MCF 10A (cell line): ENCODE measurements at regions of chr6 and their contacts with region 1.

Region 1: GRCh38 chr6:118893807-118894424 is at the start of gene ASF1A:
- DNase-seq: peak; percentile 99
- H3K4me3 Mint-ChIP-seq: peak within 1 kb of the TSS; percentile 95
- H3K27ac Mint-ChIP-seq: peak within 1 kb of the TSS; percentile 95
- H3K4me1 Mint-ChIP-seq: peaks cover 21% of the 10 kb centered on the region
- H3K27me3 Mint-ChIP-seq: no peaks in the 10 kb centered on the region
- CTCF ChIP-seq: peak; percentile 52
- total RNA-seq, gene ASF1A: 30.4 and 36.4 TPM in 2 replicates

Region 2: GRCh38 chr6:118881440-118882313 is 12.2 kb before region 1 on chr6:
- CTCF ChIA-PET with region 1: interaction called, 24 read pairs
- POLR2A ChIA-PET with region 1: interaction called, 31 read pairs
- intact Hi-C with region 1: no loop called
- DNase-seq: no peak
- H3K4me3 Mint-ChIP-seq: no peak overlapping the region
- H3K27ac Mint-ChIP-seq: peak overlapping the region; percentile 39
- H3K4me1 Mint-ChIP-seq: peaks cover 24% of the 10 kb centered on the region
- H3K27me3 Mint-ChIP-seq: no peaks in the 10 kb centered on the region
- CTCF ChIP-seq: no peak

Region 3: DNA sequence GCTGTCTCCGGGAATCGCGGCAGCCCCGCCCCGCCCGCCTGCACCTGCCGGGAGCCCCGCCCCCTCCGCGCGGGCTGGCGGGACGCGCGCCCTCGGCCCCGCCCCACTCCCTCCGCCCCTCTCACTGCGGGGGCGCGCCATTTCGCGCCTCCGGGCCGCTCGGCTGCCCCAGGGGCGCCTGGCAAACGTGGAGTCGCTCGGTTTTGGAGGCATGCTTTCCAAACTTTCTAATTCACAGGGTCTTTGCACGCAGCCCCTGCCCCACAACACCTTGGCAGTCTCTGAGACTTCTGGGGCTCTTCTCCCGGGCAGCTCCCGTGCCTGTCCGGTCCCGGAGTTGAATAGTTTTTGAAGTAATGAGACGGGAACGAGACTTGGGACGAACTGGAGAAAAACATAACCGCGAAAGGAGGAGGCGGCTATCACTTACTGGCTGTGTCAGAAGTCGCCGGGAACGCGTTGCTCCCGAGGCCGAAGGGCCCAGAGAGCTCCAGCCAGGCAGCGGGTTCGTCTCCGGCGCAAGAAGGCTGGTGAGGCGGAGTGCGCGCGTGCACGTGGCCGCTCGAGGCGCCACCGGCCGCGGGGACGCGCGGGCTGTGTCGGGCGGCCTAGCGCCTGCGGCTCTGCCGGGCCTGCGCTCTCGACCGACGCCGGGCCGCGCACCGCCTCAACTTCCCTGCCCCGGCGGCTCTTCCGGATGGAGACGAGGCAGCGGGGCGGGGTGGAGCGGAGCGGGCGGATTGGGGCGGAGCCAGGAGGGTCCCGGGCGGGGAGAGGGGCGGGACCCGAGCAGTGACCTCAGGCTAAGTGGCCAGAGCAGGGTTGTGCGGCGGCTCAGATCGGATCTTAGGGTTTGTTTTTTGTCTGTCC is 40.8 kb after region 1 on chr6 and contains the start of gene MCM9:
- CTCF ChIA-PET with region 1: interaction called, 3 read pairs
- POLR2A ChIA-PET with region 1: interaction called, 35 read pairs
- intact Hi-C with region 1: loop called (anchors 1 kb)
- DNase-seq: peak; percentile 85
- H3K4me3 Mint-ChIP-seq: peak within 1 kb of the TSS; percentile 85
- H3K27ac Mint-ChIP-seq: peak within 1 kb of the TSS; percentile 82
- H3K4me1 Mint-ChIP-seq: peaks cover 23% of the 10 kb centered on the region
- H3K27me3 Mint-ChIP-seq: no peaks in the 10 kb centered on the region
- CTCF ChIP-seq: no peak
- total RNA-seq, gene MCM9: 13.0 and 14.7 TPM in 2 replicates